Dendritic cell treated with granulocyte-macrophage colony-stimulating factor and Interleukin-4, amounts not matched to agents 40 ng/mL and 50 ng/mL, for 4 days (primary cell): ENCODE measurements at regions of chr6 and their contacts with region 1.

Region 1: DNA sequence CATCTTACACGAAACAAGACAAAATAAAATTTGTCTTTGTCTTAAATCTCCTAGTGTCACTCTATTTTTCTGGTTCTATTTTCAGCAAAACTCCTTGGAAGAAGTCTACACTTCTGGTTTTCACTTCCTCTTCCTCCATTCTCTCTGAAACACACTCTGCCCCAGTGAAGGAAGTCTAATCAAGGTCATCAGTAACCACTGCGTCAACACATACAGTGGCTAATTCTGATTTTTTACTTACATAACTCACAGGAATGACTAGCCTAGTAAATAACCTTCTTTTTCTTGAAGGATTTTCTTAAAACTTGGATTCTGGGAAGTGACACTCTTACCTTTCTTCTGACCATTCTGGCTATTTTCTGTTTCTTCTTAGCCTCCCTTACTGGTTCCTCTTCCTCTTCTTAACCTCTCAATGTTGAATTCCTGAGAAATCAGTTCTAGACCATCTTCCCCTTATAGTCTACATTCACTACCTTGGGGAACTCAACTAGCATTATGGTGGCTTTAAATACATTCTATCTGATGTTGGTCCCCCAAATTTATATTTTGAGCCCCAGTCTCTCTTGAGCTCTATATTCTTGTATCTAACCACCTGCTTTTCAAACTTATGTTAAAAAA is 37.5 kb downstream of the AIG1 start:
- H3K4me3 Mint-ChIP-seq: no peak overlapping the region
- H3K27ac Mint-ChIP-seq: no peak overlapping the region
- H3K4me1 Mint-ChIP-seq: peaks cover 25% of the 10 kb centered on the region
- H3K27me3 Mint-ChIP-seq: no peaks in the 10 kb centered on the region

Region 2: GRCh38 chr6:142223938-142224337 is 874.2 kb before region 1 on chr6:
- intact Hi-C with region 1: no loop called
- H3K4me3 Mint-ChIP-seq: no peak overlapping the region
- H3K27ac Mint-ChIP-seq: no peak overlapping the region
- H3K4me1 Mint-ChIP-seq: no peaks in the 10 kb centered on the region
- H3K27me3 Mint-ChIP-seq: no peaks in the 10 kb centered on the region

Region 3: GRCh38 chr6:143060354-143060805 is 37.8 kb before region 1 on chr6:
- intact Hi-C with region 1: loop called (anchors 5 kb)
- H3K4me3 Mint-ChIP-seq: peak overlapping the region; percentile 82
- H3K27ac Mint-ChIP-seq: peak overlapping the region; percentile 96
- H3K4me1 Mint-ChIP-seq: peaks cover 41% of the 10 kb centered on the region
- H3K27me3 Mint-ChIP-seq: peaks cover 2% of the 10 kb centered on the region

Region 4: DNA sequence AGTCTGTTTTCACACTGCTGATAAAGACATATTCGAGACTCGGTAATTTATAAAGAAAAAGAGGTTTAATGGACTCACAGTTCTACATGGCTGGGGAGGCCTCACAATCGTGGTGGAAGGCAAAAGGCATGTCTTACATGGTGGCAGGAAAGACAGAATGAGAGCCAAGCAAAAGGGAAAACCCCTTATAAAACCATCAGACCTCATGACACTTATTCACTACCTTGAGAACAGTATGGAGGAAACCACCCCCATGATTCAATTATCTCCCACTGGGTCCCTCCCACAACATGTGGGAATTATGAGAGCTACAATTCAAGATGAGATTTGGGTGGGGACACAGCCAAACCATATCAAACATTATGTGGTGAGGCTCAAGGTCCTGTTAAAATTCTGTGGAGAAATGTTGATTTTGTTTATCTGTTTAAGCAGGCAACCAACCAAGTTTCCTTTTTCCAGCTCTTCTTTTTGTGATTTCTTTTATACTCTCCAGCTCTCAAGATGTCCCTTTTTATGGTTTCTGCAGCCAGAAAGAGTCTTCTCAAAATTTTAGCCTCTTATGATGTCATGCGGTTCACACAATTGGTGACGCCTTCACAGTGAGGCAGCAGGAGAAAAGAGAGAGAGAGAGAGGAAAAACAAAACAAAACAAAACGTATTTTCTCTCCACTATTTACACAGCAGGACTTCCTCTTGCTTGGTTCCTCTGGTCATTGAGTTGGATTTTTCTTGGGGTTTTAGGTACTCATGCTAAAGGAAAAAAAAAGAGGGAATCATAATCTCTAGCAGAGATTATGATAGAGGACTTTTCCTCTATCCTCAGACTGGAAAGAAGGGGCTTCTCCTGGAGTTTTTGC is 19.5 kb before region 1 on chr6:
- intact Hi-C with region 1: no loop called
- H3K4me3 Mint-ChIP-seq: no peak overlapping the region
- H3K27ac Mint-ChIP-seq: no peak overlapping the region
- H3K4me1 Mint-ChIP-seq: peaks cover 6% of the 10 kb centered on the region
- H3K27me3 Mint-ChIP-seq: no peaks in the 10 kb centered on the region